ENCODE measurements at regions of chr4 and their contacts with region 1.

Region 1: DNA sequence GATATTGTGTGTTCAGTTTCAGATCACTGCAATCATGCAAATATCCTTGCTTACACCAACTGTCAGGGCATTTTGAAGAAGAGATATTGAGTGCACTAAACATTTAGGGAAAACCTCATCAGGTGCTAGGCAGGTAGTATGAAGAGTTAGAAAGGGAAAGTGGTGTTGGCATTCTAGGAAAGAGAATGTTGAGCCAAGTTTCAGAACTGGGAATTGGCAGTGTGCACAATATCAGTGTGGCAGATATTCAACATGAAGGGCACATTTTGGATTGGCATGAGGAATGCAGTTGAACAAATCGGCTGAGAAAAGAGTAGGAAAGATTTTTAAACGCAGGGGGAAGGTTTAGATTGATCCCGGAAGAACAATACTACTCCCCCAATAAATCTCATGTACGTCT is 43.4 kb upstream of the SMAD1 start:
- DNase-seq: no peak
- ATAC-seq: no peak
- H3K4me3 ChIP-seq: no peak overlapping the region
- H3K27ac ChIP-seq: no peak overlapping the region
- H3K4me1 ChIP-seq: no peaks in the 10 kb centered on the region
- H3K27me3 ChIP-seq: no peaks in the 10 kb centered on the region
- CTCF ChIP-seq: no peak

Region 2: DNA sequence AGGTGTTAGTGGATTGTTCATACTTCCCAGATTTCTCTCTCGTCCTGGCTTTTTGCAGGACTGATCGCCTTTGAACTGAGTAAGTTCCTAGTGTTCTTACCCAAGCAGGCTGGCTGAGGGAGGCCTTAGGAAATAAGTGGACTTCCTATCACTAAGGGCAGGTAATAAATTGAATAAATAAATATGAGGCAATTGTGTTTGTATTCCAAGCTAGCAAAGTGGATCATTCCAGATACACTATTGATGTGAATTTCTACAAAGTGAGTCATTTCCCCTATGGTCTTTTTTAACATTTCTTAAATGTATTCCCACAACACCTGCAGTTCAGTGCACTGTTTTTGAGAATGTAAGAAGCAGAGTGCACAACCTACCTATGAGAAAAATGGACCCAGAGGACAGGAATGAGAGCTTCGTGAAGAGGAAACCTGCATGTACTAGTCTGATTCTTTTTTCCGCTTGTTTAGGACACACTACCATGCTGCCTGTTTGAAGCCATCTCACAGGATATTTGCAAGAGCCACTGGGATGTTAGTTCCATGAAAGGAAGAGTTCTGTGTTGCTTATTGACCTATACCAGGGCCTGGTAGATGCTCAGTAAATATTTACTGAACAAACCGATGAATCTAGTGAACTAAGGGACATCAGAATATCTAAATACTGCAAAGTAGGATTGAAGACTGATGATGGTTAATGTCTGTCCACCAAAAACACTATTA is 14.3 kb after region 1 on chr4:
- CTCF ChIA-PET with region 1: no interaction called
- POLR2A ChIA-PET with region 1: no interaction called
- in situ Hi-C with region 1: no loop called
- intact Hi-C with region 1: loop called (anchors 2 kb)
- DNase-seq: no peak
- ATAC-seq: no peak
- H3K4me3 ChIP-seq: no peak overlapping the region
- H3K27ac ChIP-seq: no peak overlapping the region
- H3K4me1 ChIP-seq: no peaks in the 10 kb centered on the region
- H3K27me3 ChIP-seq: no peaks in the 10 kb centered on the region
- CTCF ChIP-seq: no peak

Region 3: DNA sequence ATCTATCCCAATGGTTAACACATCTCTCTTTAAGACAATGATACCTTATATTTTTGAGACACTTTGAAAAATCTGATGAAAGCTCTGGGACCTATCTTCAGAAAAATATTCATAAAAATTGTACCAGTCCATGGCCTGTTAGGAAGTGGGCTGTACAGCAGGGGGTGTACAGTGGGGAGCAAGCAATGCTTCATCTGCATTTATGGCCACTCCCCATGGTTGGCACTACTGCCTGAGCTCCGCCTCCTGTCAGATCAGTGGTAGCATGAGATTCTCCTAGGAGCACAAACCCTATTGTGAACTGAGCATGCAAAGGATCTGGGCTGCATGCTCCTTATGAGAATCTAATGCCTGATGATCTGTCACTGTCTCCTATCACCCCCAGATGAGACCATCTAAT is 284.3 kb after region 1 on chr4:
- CTCF ChIA-PET with region 1: no interaction called
- POLR2A ChIA-PET with region 1: no interaction called
- in situ Hi-C with region 1: no loop called
- intact Hi-C with region 1: no loop called
- DNase-seq: no peak
- ATAC-seq: no peak
- H3K4me3 ChIP-seq: no peak overlapping the region
- H3K27ac ChIP-seq: no peak overlapping the region
- H3K4me1 ChIP-seq: no peaks in the 10 kb centered on the region
- H3K27me3 ChIP-seq: no peaks in the 10 kb centered on the region
- CTCF ChIP-seq: no peak

Measured in Panc1 (cell line).